HEK293T (cell line): ENCODE measurements at regions of chr12 and their contacts with region 1.

Region 1: DNA sequence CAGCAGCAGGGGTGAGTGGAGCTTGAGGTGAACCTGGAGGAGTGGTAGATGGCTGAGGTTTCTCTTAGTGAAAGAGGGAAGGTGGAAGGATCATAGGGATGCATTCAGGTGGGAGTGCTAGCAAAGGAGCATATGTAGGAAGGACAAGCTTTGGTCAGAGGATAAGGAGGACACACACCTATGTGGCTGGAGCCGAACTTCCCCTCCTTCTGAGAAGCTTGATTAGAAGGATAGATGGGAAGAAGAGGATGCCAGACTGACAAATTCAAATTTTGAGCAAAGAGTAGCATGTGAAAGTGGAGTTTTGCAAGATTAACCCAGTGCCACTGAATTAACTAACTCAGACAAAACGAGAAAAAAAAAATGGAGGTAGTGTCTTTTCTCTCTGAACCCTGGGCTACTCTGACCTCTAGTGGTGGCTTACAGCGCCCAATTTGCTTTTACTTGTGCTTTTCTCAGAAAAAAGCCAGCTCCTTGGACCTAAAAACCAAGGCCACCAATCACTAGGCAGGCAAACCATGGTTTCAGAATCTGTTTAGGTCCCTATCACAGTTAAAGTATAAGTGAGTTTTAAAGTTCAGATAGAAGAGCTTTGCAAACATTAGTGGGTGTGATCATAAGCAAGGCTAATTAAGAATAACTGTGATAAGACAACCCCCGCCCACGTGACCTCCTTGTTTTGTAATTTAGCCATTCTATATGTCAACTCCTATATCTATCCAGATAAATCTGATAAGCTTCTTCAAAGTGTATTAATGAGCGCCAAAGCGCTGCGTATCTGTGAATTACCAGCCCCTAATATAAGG is 15.5 kb downstream of the EMP1 start:
- DNase-seq: peak; percentile 62

Region 2: GRCh38 chr12:12916135-12916944 is 295.7 kb before region 1 on chr12:
- CTCF ChIA-PET with region 1: interaction called, 10 read pairs
- POLR2A ChIA-PET with region 1: no interaction called
- DNase-seq: peak; percentile 84

Region 3: GRCh38 chr12:12983420-12984035 is 228.5 kb before region 1 on chr12:
- CTCF ChIA-PET with region 1: interaction called, 16 read pairs
- POLR2A ChIA-PET with region 1: no interaction called
- DNase-seq: peak; percentile 50

Region 4: GRCh38 chr12:13090054-13090725 is 121.9 kb before region 1 on chr12:
- CTCF ChIA-PET with region 1: interaction called, 13 read pairs
- POLR2A ChIA-PET with region 1: no interaction called
- DNase-seq: no peak

Region 5: GRCh38 chr12:13100882-13101769 is 110.9 kb before region 1 on chr12:
- CTCF ChIA-PET with region 1: interaction called, 31 read pairs
- POLR2A ChIA-PET with region 1: interaction called, 6 read pairs
- DNase-seq: peak; percentile 81

Region 6: GRCh38 chr12:13135371-13136178 is 76.5 kb before region 1 on chr12:
- CTCF ChIA-PET with region 1: no interaction called
- POLR2A ChIA-PET with region 1: no interaction called
- DNase-seq: no peak

Region 7: DNA sequence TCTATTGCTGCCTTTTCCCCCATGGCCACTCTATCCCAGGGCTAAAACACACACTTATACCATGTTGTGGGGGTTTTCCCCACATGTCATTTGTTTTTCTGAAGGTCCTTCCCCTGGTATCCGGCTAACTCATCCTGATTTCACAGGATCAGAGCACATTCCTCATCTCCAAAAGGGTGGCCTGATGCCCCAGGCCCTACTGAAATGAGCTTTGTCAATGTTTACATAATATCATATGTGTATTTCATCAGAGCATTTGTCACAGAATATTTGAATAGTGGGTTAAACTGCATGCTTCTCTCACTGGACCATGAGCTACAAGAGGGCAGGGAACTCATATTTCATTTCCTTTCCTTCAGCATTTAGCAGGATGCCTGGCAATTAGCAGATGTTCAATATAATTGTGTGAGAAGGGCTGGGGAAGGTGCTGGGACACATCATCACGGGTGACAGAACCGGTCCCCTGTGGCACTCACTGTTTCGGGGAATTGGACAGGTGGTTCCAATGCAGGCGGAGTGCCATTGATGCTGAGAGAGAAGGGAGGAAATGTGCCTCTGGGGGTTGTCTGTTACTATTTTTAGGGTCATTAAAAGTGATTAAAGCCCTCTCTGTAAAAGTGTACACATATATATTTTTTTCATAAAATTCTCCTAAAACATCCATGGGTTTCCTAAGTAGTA is 11.3 kb after region 1 on chr12:
- CTCF ChIA-PET with region 1: interaction called, 21 read pairs
- POLR2A ChIA-PET with region 1: no interaction called
- DNase-seq: no peak

Region 8: DNA sequence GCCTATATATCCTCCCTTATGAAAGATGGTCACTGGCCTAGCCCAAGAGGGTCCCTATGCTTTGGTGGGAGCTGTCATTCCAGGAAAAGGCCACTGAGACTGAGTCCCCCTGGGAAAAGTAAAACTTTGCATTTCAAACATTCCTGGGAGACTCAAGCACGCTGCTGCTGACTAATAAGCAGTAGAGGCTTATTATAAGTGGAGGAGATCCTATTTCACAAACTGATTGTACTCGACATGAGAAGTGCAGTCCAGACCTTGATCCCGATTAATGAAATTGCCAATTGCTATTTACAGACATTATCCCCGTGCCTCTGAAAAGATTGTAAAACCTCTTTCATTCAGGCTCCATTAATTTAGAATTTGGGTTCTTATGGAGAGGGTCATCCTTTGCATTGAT is 81.0 kb after region 1 on chr12:
- CTCF ChIA-PET with region 1: no interaction called
- POLR2A ChIA-PET with region 1: no interaction called
- DNase-seq: no peak

Region 9: GRCh38 chr12:13304924-13305323 is 92.9 kb after region 1 on chr12:
- CTCF ChIA-PET with region 1: no interaction called
- POLR2A ChIA-PET with region 1: no interaction called
- DNase-seq: no peak

Region 10: DNA sequence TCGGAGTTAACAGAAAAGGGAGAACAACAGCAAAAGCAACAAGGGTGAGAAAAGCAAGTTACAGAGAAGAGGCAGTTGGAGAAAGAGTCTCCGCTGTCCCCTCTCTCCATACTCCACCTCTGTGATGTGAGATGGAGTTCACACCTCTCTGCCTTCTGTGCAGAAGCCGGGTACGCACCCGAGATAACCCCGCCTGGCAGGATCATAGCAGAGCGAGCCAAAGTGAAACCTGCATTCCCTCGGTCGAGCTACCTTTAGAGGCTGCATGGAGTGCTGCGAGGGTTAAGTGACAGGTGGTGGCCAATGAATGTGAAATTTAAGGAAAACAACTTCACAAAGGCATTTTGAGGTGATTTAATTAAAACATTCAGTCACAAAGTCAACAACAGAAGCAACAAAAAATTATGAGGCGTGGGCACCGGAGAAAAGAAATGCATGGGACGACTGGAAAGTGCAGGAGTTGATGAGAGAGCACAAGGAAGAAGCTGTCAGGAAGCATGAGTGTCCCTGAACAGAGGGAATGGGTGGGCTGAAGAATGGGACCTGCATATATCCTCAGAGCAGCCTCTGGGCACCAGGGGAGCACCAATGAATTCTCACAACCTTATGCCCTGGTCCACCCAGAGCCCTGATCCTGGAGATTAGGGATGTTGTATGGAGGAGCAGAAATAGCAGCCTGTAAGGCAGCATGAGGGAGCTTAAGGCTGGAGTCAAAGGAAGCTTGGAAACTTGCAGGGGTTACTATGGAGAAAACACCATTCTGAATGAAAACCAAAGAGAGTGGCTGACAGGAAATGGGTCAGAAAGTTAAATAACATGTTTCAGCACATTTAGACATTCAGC is 192.8 kb after region 1 on chr12:
- CTCF ChIA-PET with region 1: no interaction called
- POLR2A ChIA-PET with region 1: no interaction called
- DNase-seq: no peak